Natural killer cell (primary cell): ENCODE measurements at regions of chr16 and their contacts with region 1.

Region 1: GRCh38 chr16:11851294-11852091 is at the start of gene RSL1D1:
- DNase-seq: peak; percentile 98
- ATAC-seq: peak; percentile 80 to 91 (median 85)
- H3K4me3 ChIP-seq: peak within 1 kb of the TSS; percentile 91
- H3K4me3 Mint-ChIP-seq: peak within 1 kb of the TSS; percentile 99
- H3K27ac ChIP-seq: peak within 1 kb of the TSS; percentile 87
- H3K27ac Mint-ChIP-seq: peak within 1 kb of the TSS; percentile 97 to 98
- H3K4me1 ChIP-seq: peaks cover 24% of the 10 kb centered on the region
- H3K4me1 Mint-ChIP-seq: peaks cover 44 to 47% of the 10 kb centered on the region in 2 donors
- H3K27me3 ChIP-seq: no peaks in the 10 kb centered on the region
- H3K27me3 Mint-ChIP-seq: no peaks in the 10 kb centered on the region
- CTCF ChIP-seq: no peak
- total RNA-seq, gene RSL1D1: 66.3 to 102 (median 99.1) TPM

Region 2: DNA sequence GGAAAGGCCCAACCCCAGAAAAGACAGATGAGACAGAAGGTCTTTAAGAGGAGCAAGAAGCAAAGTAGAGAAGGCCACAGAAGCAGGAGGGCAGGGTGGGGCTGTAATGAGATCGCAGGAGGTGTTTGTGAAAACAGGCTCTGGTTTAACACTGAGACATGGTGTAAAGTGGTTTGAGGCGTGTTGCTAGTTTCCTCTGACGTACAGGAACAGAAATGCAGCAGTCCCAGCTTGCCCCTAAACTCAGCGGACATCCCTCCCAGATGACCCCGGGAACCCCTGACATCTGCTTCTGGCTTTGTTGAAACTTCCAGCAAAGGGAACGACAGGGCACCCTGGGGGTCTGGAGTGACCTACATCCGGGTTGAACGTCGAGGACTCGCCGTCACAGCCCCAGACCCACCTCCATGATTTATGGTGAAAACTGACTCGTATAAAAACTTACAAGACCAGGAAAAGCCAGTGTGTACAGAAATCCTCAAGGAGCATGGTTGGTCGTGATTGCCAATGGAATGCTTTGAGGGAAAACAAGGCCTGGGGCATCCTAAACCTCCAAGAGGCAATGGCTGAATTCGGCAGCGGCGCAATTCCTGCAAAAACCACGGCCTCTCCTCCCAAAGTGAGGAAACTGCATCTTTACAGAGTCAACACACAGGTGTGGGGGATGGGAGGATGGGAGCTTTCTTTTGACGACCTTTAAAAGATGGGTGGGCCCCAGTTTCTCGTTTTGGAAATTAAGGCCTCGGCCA is 290.6 kb before region 1 on chr16:
- intact Hi-C with region 1: no loop called
- DNase-seq: peak; percentile 72 to 94
- ATAC-seq: peak; percentile 72 to 91 (median 80)
- H3K4me3 ChIP-seq: peak overlapping the region; percentile 68
- H3K4me3 Mint-ChIP-seq: peak overlapping the region; percentile 97
- H3K27ac ChIP-seq: peak overlapping the region; percentile 100
- H3K27ac Mint-ChIP-seq: peak overlapping the region; percentile 97 to 98
- H3K4me1 ChIP-seq: peaks cover 90% of the 10 kb centered on the region
- H3K4me1 Mint-ChIP-seq: peaks cover 71 to 76% of the 10 kb centered on the region in 2 donors
- H3K27me3 ChIP-seq: no peaks in the 10 kb centered on the region
- H3K27me3 Mint-ChIP-seq: no peaks in the 10 kb centered on the region
- CTCF ChIP-seq: no peak

Region 3: DNA sequence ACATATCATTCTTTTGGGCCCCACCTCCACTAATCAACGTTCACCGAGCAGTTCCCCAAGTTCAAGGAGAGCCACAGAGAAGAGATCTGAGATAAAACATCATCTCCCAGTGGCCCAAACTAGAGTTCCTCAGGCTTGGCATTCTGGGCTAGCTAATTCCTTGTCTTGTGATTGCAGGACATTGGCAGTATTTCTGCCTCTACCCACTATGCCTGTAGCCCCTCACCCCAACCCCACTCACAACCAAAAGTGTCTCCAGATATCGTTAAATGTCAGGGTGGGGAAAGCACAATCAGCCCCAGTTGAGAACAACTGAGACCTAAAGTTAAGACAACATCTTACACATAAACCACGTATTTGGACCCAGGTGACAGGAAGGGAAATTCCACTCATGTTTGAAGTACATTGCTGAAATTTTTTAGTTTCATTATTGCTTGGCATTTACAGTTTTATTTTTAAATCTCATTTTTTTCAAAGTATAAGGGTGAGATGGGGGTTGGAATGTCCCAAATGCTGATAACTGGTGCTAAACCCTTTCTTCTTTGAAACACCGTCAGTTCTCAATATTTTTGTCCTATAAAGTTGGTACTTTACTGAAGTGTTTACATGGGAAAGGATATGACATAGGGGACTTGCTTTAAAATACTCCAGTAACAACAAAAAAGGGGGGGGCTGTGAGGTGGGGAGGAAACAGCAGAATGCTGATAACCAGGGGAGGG is 68.0 kb before region 1 on chr16:
- intact Hi-C with region 1: loop called (anchors 1 kb)
- DNase-seq: peak; percentile 39 to 91
- ATAC-seq: peak; percentile 83 to 90 (median 84)
- H3K4me3 ChIP-seq: peak overlapping the region; percentile 30
- H3K4me3 Mint-ChIP-seq: peak overlapping the region; percentile 89
- H3K27ac ChIP-seq: peak overlapping the region; percentile 99
- H3K27ac Mint-ChIP-seq: peak overlapping the region; percentile 99 to 100
- H3K4me1 ChIP-seq: peaks cover 30% of the 10 kb centered on the region
- H3K4me1 Mint-ChIP-seq: peaks cover 47 to 51% of the 10 kb centered on the region in 2 donors
- H3K27me3 ChIP-seq: no peaks in the 10 kb centered on the region
- H3K27me3 Mint-ChIP-seq: no peaks in the 10 kb centered on the region
- CTCF ChIP-seq: no peak

Region 4: GRCh38 chr16:11819798-11820197 is 31.7 kb before region 1 on chr16:
- intact Hi-C with region 1: no loop called
- DNase-seq: no peak
- ATAC-seq: peak in 1 of 3 donors; percentile 49
- H3K4me3 ChIP-seq: no peak overlapping the region
- H3K4me3 Mint-ChIP-seq: no peak overlapping the region
- H3K27ac ChIP-seq: no peak overlapping the region
- H3K27ac Mint-ChIP-seq: no peak overlapping the region
- H3K4me1 ChIP-seq: no peaks in the 10 kb centered on the region
- H3K4me1 Mint-ChIP-seq: no peaks in the 10 kb centered on the region
- H3K27me3 ChIP-seq: no peaks in the 10 kb centered on the region
- H3K27me3 Mint-ChIP-seq: no peaks in the 10 kb centered on the region
- CTCF ChIP-seq: no peak

Region 5: GRCh38 chr16:11977376-11978041 is 126.0 kb after region 1 on chr16:
- intact Hi-C with region 1: loop called (anchors 10 kb)
- DNase-seq: peak in 1 of 2 donors; percentile 7
- ATAC-seq: no peak
- H3K4me3 ChIP-seq: peak overlapping the region; percentile 74
- H3K4me3 Mint-ChIP-seq: peak overlapping the region; percentile 98
- H3K27ac ChIP-seq: peak overlapping the region; percentile 40
- H3K27ac Mint-ChIP-seq: peak overlapping the region; percentile 94 to 97
- H3K4me1 ChIP-seq: peaks cover 26% of the 10 kb centered on the region
- H3K4me1 Mint-ChIP-seq: peaks cover 28 to 34% of the 10 kb centered on the region in 2 donors
- H3K27me3 ChIP-seq: no peaks in the 10 kb centered on the region
- H3K27me3 Mint-ChIP-seq: no peaks in the 10 kb centered on the region
- CTCF ChIP-seq: no peak